CD8-positive, alpha-beta T cell (primary cell): ENCODE measurements at regions of chr5 and their contacts with region 1.

Region 1: DNA sequence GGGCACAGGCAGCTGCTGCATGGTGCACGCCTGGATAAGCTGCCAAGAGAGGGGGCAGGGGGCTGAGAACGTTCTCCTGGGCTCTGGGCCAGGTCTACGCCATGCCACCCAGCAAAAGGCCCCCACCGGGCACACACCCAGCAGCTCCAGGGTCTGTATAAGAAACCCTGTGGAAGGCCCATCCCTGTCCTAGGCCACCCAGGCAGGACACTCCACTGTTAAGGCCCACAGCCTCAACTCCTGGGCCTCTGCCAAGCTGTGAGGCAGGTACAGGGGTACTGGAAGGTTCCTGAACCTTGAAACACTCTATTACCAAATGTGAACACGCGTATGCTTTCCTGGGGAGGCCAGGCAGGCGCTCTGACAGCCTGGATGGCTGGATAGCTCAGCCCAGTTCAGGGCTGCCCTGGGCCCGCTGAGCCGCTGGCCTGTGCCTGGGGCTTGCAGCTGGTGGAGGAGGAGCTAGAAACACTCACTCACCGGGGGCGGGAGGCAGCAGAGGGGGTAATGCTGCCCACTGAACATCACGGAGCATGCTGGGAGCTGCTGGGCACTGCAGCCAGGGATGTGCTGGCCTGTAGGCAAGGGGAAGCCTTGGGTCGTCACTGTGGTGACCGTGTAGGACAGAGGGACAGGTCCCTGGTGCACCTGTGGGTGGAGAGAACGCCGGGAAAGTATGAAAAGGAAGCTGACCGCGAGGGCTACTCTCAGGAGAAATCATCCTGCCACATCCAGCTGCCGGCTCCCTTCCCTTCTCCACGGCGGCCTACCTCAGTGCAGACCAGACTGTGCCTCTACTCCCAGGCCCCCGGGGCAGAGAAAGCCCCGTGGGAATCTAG is 6.0 kb downstream of the RNF44 start:
- DNase-seq: peak in 3 of 9 experiments; percentile 28 to 42 (median 32)
- ATAC-seq: no peak
- H3K4me3 ChIP-seq: peak overlapping the region; percentile 41 to 46
- H3K4me3 Mint-ChIP-seq: peak overlapping the region; percentile 78
- H3K27ac ChIP-seq: peak overlapping the region; percentile 32 to 69
- H3K27ac Mint-ChIP-seq: peak overlapping the region; percentile 91
- H3K4me1 ChIP-seq: peaks cover 79% of the 10 kb centered on the region
- H3K4me1 Mint-ChIP-seq: peaks cover 65% of the 10 kb centered on the region
- H3K27me3 ChIP-seq: no peaks in the 10 kb centered on the region
- H3K27me3 Mint-ChIP-seq: no peaks in the 10 kb centered on the region
- CTCF ChIP-seq: no peak

Region 2: GRCh38 chr5:175617447-175617846 is 913.8 kb before region 1 on chr5:
- CTCF ChIA-PET with region 1: no interaction called
- POLR2A ChIA-PET with region 1: no interaction called
- intact Hi-C with region 1: no loop called
- DNase-seq: peak in 1 of 9 experiments; percentile 8
- ATAC-seq: no peak
- H3K4me3 ChIP-seq: no peak overlapping the region
- H3K4me3 Mint-ChIP-seq: no peak overlapping the region
- H3K27ac ChIP-seq: no peak overlapping the region
- H3K27ac Mint-ChIP-seq: no peak overlapping the region
- H3K4me1 ChIP-seq: no peaks in the 10 kb centered on the region
- H3K4me1 Mint-ChIP-seq: peaks cover 5% of the 10 kb centered on the region
- H3K27me3 ChIP-seq: no peaks in the 10 kb centered on the region
- H3K27me3 Mint-ChIP-seq: no peaks in the 10 kb centered on the region
- CTCF ChIP-seq: no peak

Region 3: DNA sequence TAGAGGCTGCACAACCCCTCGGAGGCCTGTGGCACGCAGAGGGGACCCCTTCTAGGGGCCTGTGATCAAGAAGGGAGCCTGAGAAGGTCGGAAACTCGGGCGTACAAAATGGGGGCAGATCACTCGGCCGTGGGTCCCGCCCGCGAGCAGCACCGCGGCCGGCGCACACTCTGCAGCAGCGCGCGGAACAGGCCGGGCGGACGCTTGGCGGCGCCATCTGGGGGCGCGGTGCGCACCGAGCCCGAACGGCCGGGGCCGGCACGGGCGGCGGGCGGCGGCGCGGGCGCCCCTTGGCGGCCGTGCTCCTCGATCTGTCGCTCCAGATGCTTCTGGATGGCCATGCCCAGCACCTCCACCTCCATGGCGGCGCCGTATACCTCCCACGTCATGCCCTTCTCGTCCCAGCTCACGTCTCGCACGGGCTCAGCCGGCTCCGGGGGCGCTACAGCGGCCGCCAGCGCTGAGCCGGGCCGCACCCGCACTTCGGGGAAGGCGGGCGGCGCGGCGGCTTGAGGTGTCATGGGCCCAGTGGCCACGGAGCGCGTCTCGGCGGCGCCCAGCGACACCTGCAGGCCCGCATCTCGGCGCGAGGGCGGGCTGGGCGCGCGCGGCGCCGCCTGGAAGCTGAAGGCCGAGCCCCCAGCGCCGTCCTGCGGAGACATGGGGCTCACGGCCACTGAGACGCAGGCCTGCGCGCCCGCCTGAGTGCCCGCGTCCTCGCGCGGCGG is 65.7 kb after region 1 on chr5:
- CTCF ChIA-PET with region 1: no interaction called
- POLR2A ChIA-PET with region 1: interaction called, 8 read pairs
- intact Hi-C with region 1: loop called (anchors 2 kb)
- DNase-seq: peak; percentile 44 to 84 (median 66)
- ATAC-seq: peak; percentile 81
- H3K4me3 ChIP-seq: peak overlapping the region; percentile 36 to 52
- H3K4me3 Mint-ChIP-seq: peak overlapping the region; percentile 77
- H3K27ac ChIP-seq: no peak overlapping the region
- H3K27ac Mint-ChIP-seq: no peak overlapping the region
- H3K4me1 ChIP-seq: peaks cover 9% of the 10 kb centered on the region
- H3K4me1 Mint-ChIP-seq: peaks cover 7% of the 10 kb centered on the region
- H3K27me3 ChIP-seq: no peaks in the 10 kb centered on the region
- H3K27me3 Mint-ChIP-seq: no peaks in the 10 kb centered on the region
- CTCF ChIP-seq: no peak